Activated naive CD4-positive, alpha-beta T cell treated with anti-CD3 and anti-CD28 coated beads for 36 hours (primary cell): ENCODE measurements at regions of chr16 and their contacts with region 1.

Region 1: DNA sequence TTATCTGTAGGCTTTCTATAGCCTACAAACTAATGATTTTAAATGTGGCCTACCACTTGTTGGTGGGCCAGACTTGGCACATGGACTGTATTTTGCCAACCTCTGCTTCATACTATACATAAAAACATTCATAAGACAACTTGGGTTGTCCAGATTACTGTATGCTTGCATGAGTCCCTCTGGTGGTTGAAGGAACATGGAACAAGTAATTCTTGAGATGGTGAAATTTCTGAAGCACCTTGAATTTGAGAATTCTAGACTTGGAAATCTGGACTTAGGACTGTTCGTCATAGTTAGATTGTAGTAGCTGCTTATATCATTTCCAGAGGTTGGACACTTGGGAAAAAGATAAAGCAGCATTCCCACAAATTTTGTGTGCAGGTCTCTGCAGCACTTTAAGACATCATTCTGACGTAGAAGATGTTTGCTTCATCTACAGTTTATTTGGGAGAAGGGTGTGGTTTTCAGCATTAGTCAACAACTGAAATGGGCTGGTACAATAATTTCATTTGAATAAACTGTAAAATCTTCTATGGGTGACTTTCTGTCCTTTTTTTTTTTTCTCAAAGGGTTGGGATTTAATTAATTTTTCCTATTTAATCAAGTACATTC is 31.2 kb downstream of the NFATC3 start:
- DNase-seq: no peak
- H3K4me3 Mint-ChIP-seq: no peak overlapping the region
- H3K27ac Mint-ChIP-seq: no peak overlapping the region
- H3K4me1 Mint-ChIP-seq: peaks cover 85% of the 10 kb centered on the region
- H3K27me3 Mint-ChIP-seq: no peaks in the 10 kb centered on the region

Region 2: DNA sequence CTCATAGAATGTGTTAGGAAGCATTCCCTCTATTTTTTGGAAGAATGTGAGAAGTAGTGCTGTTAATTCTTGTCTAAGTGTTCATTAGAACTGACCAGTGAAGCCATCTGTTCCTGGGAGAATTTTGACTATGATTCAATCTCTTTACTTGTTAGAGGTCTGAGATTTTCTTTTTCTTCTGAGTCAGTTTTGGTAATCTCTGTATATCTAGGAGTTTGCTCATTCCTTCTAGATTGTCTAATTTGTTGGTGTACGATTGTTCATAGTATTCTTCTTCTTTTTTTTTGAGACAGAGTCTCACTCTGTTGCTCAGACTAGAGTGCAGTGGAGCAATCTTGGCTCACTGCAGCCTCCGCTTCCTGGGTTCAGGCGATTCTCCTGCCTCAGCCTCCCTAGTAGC is 10.8 kb before region 1 on chr16:
- CTCF ChIA-PET with region 1: no interaction called
- intact Hi-C with region 1: no loop called
- DNase-seq: no peak
- H3K4me3 Mint-ChIP-seq: no peak overlapping the region
- H3K27ac Mint-ChIP-seq: peak overlapping the region; percentile 15
- H3K4me1 Mint-ChIP-seq: peaks cover 79% of the 10 kb centered on the region
- H3K27me3 Mint-ChIP-seq: no peaks in the 10 kb centered on the region

Region 3: GRCh38 chr16:68128577-68129305 is 12.4 kb after region 1 on chr16:
- CTCF ChIA-PET with region 1: interaction called, 14 read pairs
- intact Hi-C with region 1: no loop called
- DNase-seq: no peak
- H3K4me3 Mint-ChIP-seq: no peak overlapping the region
- H3K27ac Mint-ChIP-seq: no peak overlapping the region
- H3K4me1 Mint-ChIP-seq: peaks cover 60% of the 10 kb centered on the region
- H3K27me3 Mint-ChIP-seq: no peaks in the 10 kb centered on the region